ENCODE measurements at regions of chr7 and their contacts with region 1.

Region 1: DNA sequence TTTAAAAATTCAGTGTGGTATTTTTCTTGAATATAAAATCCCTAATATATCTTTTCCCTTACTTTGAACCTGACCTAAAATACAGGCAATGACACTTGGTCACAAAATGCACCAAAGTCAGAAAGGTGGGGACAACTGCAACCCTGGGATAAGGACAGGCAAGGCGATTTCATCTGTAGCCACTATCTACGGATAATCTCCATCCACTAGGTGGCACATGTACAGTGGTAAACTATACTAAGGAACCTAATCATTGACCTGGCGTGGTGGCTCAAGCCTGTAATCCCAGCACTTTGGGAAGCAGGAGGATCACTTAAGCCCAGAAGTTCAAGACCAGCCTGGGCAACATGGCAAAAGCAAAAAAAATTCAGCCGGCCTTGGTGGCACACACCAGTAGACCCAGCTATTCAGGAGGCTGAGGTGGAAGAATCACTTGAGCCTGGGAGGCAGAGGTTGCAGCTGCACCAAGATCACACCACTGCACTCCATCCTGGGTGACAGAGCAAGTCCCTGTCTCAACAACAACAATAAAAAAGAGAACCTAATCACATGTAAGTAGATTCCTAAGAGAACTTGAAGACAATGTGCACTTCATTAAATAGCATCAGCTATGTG is 98.9 kb downstream of the KMT2C start:
- DNase-seq: peak; percentile 16
- ATAC-seq: peak; percentile 86
- H3K4me3 Mint-ChIP-seq: no peak overlapping the region
- H3K27ac Mint-ChIP-seq: no peak overlapping the region
- H3K4me1 Mint-ChIP-seq: peaks cover 51% of the 10 kb centered on the region
- H3K27me3 Mint-ChIP-seq: no peaks in the 10 kb centered on the region

Region 2: DNA sequence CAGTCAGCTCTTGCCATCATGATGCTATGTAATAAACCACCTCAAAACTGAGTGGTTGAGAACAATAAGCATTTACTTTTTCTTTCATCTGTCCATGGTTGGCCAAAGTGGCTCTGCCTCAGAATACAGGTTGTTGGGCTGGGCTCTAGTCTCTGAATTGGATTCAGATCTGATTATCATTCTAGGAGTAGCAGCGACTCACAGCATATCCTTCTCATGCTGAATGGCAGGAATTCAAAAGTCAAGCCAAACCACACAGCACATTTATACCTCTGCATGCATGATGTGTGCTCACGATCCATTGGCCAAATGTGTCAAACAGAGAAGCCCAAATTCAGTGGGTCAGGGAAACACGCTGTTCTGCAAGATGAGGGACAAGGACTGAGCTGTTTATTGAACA is 325.0 kb before region 1 on chr7:
- CTCF ChIA-PET with region 1: no interaction called
- POLR2A ChIA-PET with region 1: no interaction called
- intact Hi-C with region 1: no loop called
- DNase-seq: no peak
- ATAC-seq: no peak
- H3K4me3 Mint-ChIP-seq: no peak overlapping the region
- H3K27ac Mint-ChIP-seq: no peak overlapping the region
- H3K4me1 Mint-ChIP-seq: no peaks in the 10 kb centered on the region
- H3K27me3 Mint-ChIP-seq: peaks cover 2% of the 10 kb centered on the region

Region 3: DNA sequence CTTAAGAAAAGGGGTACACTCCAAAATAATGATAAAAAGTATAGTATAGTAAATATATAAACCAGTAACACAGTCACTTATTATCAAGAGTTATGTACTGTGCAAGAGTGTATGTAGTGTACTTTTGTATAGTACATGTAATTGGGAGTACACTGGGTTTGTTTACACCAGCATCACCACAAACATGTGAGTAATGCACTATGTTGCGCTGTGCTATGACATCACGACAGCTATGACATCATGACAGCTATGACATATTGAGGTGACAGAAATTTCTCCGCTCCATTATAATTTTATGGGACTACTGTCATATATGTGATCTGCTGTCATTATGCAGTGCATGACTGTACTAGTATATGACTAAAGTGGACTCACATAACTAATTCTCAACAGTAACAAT is 14.3 kb after region 1 on chr7:
- CTCF ChIA-PET with region 1: interaction called, 10 read pairs
- POLR2A ChIA-PET with region 1: no interaction called
- intact Hi-C with region 1: no loop called
- DNase-seq: peak; percentile 13
- ATAC-seq: no peak
- H3K4me3 Mint-ChIP-seq: no peak overlapping the region
- H3K27ac Mint-ChIP-seq: no peak overlapping the region
- H3K4me1 Mint-ChIP-seq: peaks cover 8% of the 10 kb centered on the region
- H3K27me3 Mint-ChIP-seq: no peaks in the 10 kb centered on the region

Region 4: DNA sequence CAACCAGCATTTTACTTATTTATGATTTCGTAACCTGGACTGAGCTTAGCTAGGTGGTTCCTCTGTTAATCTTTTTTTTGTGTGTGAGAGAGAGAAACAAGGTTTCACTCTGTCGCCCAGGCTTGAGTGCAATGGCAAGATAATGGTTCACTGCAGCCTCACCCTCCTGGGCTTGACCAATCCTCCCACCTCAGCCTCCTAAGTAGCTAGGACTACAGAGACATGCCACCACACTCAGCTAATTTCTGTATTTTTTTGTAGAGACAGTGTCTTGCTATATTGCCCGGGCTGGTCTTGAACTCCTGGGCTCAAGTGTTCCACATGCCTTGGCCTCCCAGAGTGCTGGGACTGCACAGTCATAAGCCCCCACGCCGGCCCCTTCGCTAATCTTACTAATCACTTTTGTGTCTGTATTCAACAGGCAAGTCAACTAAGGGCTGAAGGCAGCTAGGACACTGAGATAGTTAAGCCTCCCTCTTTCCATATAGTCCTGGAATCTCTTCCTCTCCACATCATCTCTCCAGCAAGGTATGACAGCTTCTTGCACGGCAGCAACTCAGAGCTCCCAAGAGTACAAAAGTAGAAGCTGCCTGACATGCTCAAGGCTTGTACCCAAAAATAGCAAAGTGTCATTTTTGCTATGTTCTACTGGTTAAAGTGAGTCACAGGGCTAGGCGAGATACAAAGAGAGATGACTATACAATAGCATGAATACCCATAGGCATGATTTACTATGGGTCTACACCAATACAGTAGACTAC is 87.7 kb after region 1 on chr7:
- CTCF ChIA-PET with region 1: interaction called, 4 read pairs
- POLR2A ChIA-PET with region 1: no interaction called
- intact Hi-C with region 1: loop called in 1 of 2 experiments (anchors 5 kb)
- DNase-seq: peak; percentile 49
- ATAC-seq: peak; percentile 90
- H3K4me3 Mint-ChIP-seq: no peak overlapping the region
- H3K27ac Mint-ChIP-seq: peak overlapping the region; percentile 76
- H3K4me1 Mint-ChIP-seq: peaks cover 67% of the 10 kb centered on the region
- H3K27me3 Mint-ChIP-seq: no peaks in the 10 kb centered on the region

Region 5: GRCh38 chr7:152463709-152464311 is 126.9 kb after region 1 on chr7:
- CTCF ChIA-PET with region 1: interaction called, 3 read pairs
- POLR2A ChIA-PET with region 1: no interaction called
- intact Hi-C with region 1: loop called in 1 of 2 experiments (anchors 1 kb)
- DNase-seq: peak; percentile 100
- ATAC-seq: peak; percentile 95
- H3K4me3 Mint-ChIP-seq: peak overlapping the region; percentile 88
- H3K27ac Mint-ChIP-seq: no peak overlapping the region
- H3K4me1 Mint-ChIP-seq: peaks cover 5% of the 10 kb centered on the region
- H3K27me3 Mint-ChIP-seq: no peaks in the 10 kb centered on the region

Region 6: DNA sequence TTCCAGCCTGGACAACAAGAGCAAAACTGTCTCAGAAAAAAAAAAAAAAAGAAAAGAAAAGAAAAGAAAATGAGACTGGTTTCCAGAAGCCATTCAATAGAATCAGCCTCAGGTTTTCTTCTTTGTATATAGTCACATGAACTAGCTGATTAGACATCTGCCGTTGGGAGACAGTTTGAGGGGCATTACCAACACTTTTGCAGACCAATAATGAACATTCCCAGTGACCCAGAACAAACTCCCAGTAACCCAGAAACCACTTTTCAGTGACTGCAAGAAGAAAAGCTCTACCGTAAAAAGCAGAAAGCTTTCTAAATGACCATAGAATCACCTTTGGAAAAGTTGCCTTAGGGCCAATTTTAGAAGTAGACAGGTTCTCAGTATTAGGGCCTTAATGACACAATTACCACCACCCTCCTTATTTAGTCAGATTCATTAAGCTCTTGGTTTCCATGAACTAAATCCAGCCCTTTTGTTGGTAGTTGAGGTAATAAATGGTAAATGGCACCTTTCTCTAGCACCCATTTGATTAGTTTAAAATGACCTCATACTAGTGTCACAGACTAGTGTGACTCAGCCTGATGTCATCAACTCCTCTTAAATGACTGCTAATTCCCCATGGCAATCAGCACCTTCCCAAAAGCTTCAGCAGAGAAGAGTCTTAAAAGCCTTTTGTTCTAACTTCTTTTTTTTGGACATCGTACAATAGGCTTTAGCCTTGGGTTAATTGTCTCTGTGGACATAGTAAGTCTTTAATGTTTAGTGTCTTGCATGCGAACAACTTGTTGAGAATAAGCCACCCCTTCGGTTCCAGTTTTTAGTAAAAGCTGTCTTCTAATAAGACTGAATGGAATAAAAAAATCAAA is 372.7 kb after region 1 on chr7:
- CTCF ChIA-PET with region 1: interaction called, 4 read pairs
- POLR2A ChIA-PET with region 1: no interaction called
- intact Hi-C with region 1: loop called (anchors 2 to 10 kb)
- DNase-seq: no peak
- ATAC-seq: no peak
- H3K4me3 Mint-ChIP-seq: no peak overlapping the region
- H3K27ac Mint-ChIP-seq: no peak overlapping the region
- H3K4me1 Mint-ChIP-seq: peaks cover 3% of the 10 kb centered on the region
- H3K27me3 Mint-ChIP-seq: no peaks in the 10 kb centered on the region